Activated CD4-positive, alpha-beta memory T cell treated with anti-CD3 and anti-CD28 coated beads, Interleukin-2, amount 10 ng/mL, durations not matched to agents 7 days and 5 days (primary cell): ENCODE measurements at regions of chr12 and their contacts with region 1.

Region 1: DNA sequence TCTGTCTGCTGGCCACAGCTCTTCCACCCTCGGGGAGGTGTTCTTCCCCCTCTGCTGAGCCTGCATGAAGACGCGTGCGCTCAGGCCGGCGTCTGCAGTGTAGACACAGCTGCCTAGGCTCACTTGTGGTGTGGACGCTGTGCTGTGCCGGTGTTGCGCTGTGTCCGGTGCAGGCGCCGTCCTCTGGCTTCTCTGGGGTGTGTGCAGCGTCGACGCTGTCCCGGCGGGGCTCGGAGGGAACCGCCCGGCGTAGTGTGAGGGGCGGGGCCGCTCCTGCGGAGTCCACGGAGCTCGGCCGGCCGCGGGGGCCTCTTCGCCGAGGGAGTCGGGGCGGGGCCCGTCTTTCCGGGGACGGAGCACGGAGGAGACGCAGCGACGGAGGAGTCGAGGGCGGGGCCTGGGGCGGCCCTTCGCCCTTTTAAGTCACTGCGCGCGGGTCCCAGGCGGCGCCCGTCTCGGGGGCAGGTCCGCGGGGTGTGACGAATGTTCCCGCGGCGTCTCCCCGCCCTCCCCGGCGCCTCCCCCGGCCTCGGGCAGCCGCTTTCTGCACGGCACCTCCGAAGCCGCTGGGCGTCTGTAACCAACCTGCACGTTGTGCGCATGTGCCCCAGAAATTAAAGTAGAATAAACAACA is 45.2 kb downstream of the NOC4L start:
- DNase-seq: peak; percentile 97
- H3K4me3 Mint-ChIP-seq: peak overlapping the region; percentile 96
- H3K27ac Mint-ChIP-seq: peak overlapping the region; percentile 90
- H3K4me1 Mint-ChIP-seq: peaks cover 40% of the 10 kb centered on the region
- H3K27me3 Mint-ChIP-seq: peaks cover 7% of the 10 kb centered on the region

Region 2: DNA sequence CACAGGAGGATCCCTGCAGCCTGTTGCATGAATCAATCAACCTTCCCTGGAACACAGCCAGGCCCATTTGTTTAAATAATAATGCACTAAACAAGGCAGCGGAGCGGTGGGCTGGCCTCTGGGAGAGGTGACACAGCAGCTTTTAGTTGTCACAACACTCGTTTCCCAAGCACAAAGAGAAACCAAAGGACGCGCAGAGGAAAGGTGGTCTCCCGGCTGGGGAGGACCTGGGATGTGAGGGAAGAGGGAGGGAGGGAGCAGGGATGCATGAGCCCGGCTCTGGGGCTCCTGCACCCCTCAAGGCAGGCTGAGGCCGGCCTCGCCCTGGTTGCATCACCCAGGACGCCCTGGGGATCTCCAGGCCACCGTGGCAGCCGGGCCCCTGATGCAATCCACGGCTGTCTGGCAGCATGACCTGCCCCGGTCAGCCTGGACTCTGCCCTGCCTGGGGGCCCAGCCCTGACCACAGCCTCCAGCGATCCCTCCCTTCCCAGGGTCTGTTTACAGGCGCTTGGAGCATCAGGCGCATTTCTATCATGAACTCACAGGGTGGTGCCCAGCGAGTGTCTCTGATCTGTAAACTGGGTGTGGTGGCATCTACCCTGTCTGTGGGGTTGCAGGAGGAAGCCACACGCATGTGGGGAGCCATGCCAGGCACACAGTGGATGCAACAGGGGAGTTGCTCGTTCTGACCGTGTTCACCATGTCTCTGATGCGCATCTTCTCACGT is 328.8 kb before region 1 on chr12:
- CTCF ChIA-PET with region 1: no interaction called
- POLR2A ChIA-PET with region 1: no interaction called
- DNase-seq: peak; percentile 53
- H3K4me3 Mint-ChIP-seq: no peak overlapping the region
- H3K27ac Mint-ChIP-seq: peak overlapping the region; percentile 68
- H3K4me1 Mint-ChIP-seq: peaks cover 20% of the 10 kb centered on the region
- H3K27me3 Mint-ChIP-seq: peaks cover 4% of the 10 kb centered on the region

Region 3: DNA sequence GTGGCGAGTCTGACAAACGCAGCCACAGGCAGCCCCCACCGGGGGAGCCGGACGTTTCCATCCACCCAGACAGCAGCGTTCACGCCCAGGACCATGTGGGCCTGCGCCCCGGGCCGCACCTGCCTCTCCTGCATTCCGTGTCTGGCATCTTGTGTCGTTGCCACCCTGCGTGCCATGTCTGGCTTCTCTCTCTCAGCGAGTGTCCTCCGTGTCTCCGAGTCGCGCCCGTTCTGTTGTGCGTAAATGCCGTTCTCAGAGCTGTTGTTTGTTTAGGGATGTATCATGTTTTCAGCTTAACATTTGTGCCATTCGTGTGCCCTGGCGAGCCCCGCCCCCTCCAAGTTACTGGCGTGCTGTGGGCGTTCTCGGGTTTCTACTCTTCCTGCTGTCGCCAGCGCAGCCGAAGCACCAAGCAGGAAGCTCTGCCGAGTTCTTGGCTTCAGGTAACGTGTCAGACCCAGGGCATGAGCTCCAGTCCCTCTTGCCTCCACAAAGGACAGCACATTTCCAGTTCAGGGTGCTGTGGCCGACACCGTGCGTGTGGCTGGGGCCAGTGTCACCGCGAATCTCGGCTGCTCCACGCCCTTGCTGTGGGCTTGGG is 10.6 kb before region 1 on chr12:
- CTCF ChIA-PET with region 1: interaction called, 3 read pairs
- POLR2A ChIA-PET with region 1: interaction called, 16 read pairs
- DNase-seq: peak; percentile 66
- H3K4me3 Mint-ChIP-seq: peak overlapping the region; percentile 78
- H3K27ac Mint-ChIP-seq: peak overlapping the region; percentile 80
- H3K4me1 Mint-ChIP-seq: peaks cover 19% of the 10 kb centered on the region
- H3K27me3 Mint-ChIP-seq: peaks cover 9% of the 10 kb centered on the region